AG04449 (cell line): ENCODE measurements at regions of chr3 and their contacts with region 1.

Region 1: GRCh38 chr3:14124615-14125190 is at the starts of genes CHCHD4 and TMEM43:
- DNase-seq: peak; percentile 96
- H3K4me3 ChIP-seq: peak within 1 kb of the TSS; percentile 100
- CTCF ChIP-seq: no peak

Region 2: GRCh38 chr3:14137445-14137844 is 12.7 kb after region 1 on chr3:
- CTCF ChIA-PET with region 1: interaction called, 11 read pairs
- POLR2A ChIA-PET with region 1: interaction called, 33 read pairs
- DNase-seq: no peak
- H3K4me3 ChIP-seq: no peak overlapping the region
- CTCF ChIP-seq: no peak

Region 3: GRCh38 chr3:14144423-14145075 is 19.8 kb after region 1 on chr3:
- CTCF ChIA-PET with region 1: interaction called, 11 read pairs
- POLR2A ChIA-PET with region 1: interaction called, 33 read pairs
- DNase-seq: peak; percentile 98
- H3K4me3 ChIP-seq: peak overlapping the region; percentile 0; the same call in 1 of the 2 replicates
- CTCF ChIP-seq: no peak

Region 4: GRCh38 chr3:14170531-14171173 is 45.9 kb after region 1 on chr3:
- CTCF ChIA-PET with region 1: interaction called, 10 read pairs
- POLR2A ChIA-PET with region 1: interaction called, 9 read pairs
- DNase-seq: peak; percentile 42
- H3K4me3 ChIP-seq: no peak overlapping the region
- CTCF ChIP-seq: no peak

Region 5: DNA sequence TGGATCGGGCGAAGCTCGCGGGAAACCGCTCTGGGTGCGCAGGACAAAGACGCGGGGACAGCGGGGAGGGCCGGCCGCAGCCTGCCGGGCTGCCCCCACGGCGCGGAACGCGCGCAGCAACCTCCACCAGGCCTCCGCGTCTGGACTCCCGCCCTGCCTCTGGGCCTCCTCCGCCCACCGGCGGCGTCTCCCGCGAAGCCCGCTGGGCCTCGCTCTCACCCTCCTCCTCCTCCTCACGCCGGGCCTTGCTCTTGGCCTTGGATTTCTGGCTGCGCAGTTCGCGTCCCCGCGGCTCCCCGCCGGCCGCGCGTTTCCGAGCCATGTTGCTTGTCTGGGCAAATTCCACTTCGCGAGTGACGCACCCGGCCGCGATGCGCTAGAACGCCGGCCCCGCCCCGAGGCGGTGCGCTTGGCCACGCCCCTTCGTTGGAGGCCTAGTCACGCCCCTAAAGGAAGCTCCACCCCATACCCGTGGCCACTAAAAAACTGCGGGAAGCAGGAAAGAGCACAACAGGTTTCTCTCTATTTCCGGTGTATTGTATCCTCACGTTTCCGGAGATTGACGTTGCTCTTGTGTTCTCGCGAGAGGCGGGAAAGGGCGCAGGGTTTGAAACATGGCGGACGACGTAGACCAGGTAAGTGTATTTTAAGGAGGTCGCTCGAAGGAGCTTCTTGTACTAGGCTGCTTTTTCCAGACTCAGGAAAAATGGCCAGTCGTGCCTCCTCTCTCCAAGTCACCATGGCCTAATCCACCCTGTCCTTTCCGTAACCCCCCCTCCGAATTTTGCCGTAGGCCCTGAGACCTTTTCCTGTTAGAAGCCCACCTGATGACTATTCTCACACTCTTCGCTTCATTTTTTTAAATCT is 53.8 kb after region 1 on chr3 and contains the starts of genes LSM3 and XPC:
- CTCF ChIA-PET with region 1: interaction called, 4 read pairs
- POLR2A ChIA-PET with region 1: interaction called, 22 read pairs
- DNase-seq: peak; percentile 97
- H3K4me3 ChIP-seq: peak within 1 kb of the TSS; percentile 95
- CTCF ChIP-seq: no peak